Gastrocnemius medialis (tissue), 4 donors: ENCODE measurements at regions of chr5 and their contacts with region 1.

Region 1: DNA sequence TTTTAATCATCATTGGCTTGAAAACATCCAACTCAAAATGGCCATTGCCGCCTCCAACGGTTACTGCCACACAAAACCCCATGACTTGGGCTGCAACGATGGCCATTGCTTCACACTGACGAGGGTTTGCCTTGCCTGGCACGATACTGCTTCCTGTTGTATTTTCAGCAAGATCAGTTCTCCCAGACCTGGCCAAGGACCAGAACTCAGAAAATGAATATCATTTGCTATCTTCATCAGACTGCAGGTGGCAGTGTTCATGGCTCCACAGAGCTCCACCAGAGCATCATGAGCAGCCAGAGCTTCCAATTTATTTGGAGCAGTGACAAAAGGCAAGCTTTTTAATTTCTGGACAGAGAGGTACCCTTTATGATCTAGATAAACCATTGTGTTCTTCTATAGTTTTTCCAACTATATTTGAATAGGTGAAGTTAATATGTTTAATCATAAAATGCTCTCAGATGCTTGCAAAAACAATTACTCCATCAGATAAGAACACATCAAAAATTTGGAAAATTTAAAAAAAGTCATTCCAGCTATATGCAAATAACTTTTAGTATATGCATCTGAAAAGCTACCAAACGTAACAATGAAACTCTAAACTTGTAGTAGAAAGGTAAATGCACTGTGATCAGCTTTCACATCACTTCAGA is 10.4 kb downstream of the AMACR start:
- DNase-seq: peak; percentile 55 to 82
- ATAC-seq: peak; percentile 96 to 99
- H3K4me3 ChIP-seq: no peak overlapping the region
- H3K27ac ChIP-seq: peak overlapping the region; percentile 21 to 67 (median 30)
- H3K4me1 ChIP-seq: peaks cover 0 to 6% of the 10 kb centered on the region in 2 donors
- H3K27me3 ChIP-seq: no peaks in the 10 kb centered on the region
- CTCF ChIP-seq: peak; percentile 36 to 65 (median 50)
- POLR2A ChIP-seq: no peak

Region 2: DNA sequence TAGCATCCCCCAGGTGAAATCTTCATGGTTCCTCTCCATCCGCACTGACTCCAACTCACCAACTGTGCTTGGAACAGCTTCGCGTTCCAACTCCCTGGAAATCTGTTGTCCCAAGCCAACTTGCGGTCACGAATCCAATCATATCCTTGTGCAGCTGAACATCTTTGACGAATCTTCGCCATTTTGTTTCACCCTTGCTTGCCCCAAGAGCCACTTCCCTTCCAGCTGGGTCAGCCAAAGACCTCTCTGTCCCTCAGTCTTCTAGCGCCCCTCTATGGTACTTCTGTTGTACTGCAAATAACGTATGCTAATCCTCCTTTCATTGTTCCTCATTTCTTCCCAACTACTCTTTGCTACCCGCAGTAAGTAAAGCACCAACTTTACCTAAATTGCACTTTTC is 617.7 kb before region 1 on chr5:
- in situ Hi-C with region 1: no loop called
- intact Hi-C with region 1: no loop called
- DNase-seq: no peak
- ATAC-seq: no peak
- H3K4me3 ChIP-seq: no peak overlapping the region
- H3K27ac ChIP-seq: no peak overlapping the region
- H3K4me1 ChIP-seq: no peaks in the 10 kb centered on the region
- H3K27me3 ChIP-seq: no peaks in the 10 kb centered on the region
- CTCF ChIP-seq: peak in 2 of 5 experiments; percentile 23 to 32
- POLR2A ChIP-seq: no peak

Region 3: GRCh38 chr5:34007621-34008600 is 10.5 kb after region 1 on chr5 and contains the start of gene AMACR:
- in situ Hi-C with region 1: no loop called
- intact Hi-C with region 1: loop called (anchors 1 kb)
- DNase-seq: peak; percentile 87 to 93
- ATAC-seq: peak; percentile 96 to 97
- H3K4me3 ChIP-seq: peak within 1 kb of the TSS; percentile 58 to 82 (median 67)
- H3K27ac ChIP-seq: peak within 1 kb of the TSS; percentile 83 to 95 (median 87)
- H3K4me1 ChIP-seq: peaks cover 6 to 14% of the 10 kb centered on the region in 2 donors
- H3K27me3 ChIP-seq: no peaks in the 10 kb centered on the region
- CTCF ChIP-seq: peak in 2 of 5 experiments; percentile 10 to 16
- POLR2A ChIP-seq: peak; percentile 58 to 84
- total RNA-seq, gene AMACR: 2.5 to 15.3 (median 3.1) TPM

Region 4: GRCh38 chr5:34053133-34053532 is 55.7 kb after region 1 on chr5:
- in situ Hi-C with region 1: no loop called
- intact Hi-C with region 1: no loop called
- DNase-seq: no peak
- ATAC-seq: no peak
- H3K4me3 ChIP-seq: no peak overlapping the region
- H3K27ac ChIP-seq: no peak overlapping the region
- H3K4me1 ChIP-seq: peaks cover 0 to 14% of the 10 kb centered on the region in 2 donors
- H3K27me3 ChIP-seq: no peaks in the 10 kb centered on the region
- CTCF ChIP-seq: no peak
- POLR2A ChIP-seq: no peak

Region 5: GRCh38 chr5:34064656-34065055 is 67.2 kb after region 1 on chr5:
- in situ Hi-C with region 1: no loop called
- intact Hi-C with region 1: no loop called
- DNase-seq: no peak
- ATAC-seq: no peak
- H3K4me3 ChIP-seq: no peak overlapping the region
- H3K27ac ChIP-seq: no peak overlapping the region
- H3K4me1 ChIP-seq: no peaks in the 10 kb centered on the region
- H3K27me3 ChIP-seq: no peaks in the 10 kb centered on the region
- CTCF ChIP-seq: no peak
- POLR2A ChIP-seq: no peak

Region 6: GRCh38 chr5:34459908-34460307 is 462.5 kb after region 1 on chr5:
- in situ Hi-C with region 1: loop called (anchors 10 to 25 kb)
- intact Hi-C with region 1: no loop called
- DNase-seq: no peak
- ATAC-seq: no peak
- H3K4me3 ChIP-seq: no peak overlapping the region
- H3K27ac ChIP-seq: no peak overlapping the region
- H3K4me1 ChIP-seq: no peaks in the 10 kb centered on the region
- H3K27me3 ChIP-seq: no peaks in the 10 kb centered on the region
- CTCF ChIP-seq: no peak
- POLR2A ChIP-seq: no peak

Region 7: DNA sequence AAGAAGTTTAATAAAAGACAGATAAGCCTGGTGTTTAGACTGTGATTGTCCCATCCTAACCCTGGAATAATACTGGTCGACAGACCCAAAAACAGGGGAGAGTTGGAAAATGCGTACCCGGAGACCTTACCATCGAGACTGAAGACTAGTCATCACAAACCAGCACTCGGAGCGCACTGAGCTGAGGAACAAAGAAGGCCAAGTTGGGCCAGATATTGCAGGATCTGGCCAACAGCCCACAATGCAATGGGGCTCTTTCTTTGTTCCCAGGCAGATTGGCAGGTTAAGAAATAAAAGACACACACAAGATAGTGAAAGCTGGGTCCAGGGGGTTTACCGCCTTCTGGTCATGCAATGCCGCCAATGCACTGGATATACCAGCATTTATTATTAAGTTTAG is 470.0 kb after region 1 on chr5:
- in situ Hi-C with region 1: loop called (anchors 10 to 25 kb)
- intact Hi-C with region 1: loop called (anchors 2 kb)
- DNase-seq: no peak
- ATAC-seq: no peak
- H3K4me3 ChIP-seq: no peak overlapping the region
- H3K27ac ChIP-seq: no peak overlapping the region
- H3K4me1 ChIP-seq: no peaks in the 10 kb centered on the region
- H3K27me3 ChIP-seq: no peaks in the 10 kb centered on the region
- CTCF ChIP-seq: no peak
- POLR2A ChIP-seq: no peak

Region 8: DNA sequence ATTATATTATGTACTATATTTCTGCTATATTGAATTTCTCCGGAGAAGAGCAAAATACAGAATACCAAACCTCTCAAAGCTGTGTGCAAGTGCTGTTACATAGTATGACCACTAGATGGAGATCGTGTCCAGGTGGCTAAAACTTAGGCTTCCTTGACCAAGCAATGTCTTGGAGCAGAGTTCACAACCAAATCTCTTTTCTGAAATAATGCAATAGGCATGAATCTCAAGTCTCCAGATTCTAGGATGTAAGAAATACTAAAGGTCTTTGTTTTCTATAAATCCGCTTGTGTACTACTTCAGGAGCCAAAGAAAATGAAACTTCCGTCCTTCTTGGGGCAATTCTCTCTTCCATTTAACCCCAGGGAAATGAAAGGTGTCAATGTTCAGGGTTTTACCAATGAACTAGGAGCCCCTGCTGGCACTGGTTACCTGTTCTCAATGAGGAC is 477.1 kb after region 1 on chr5:
- in situ Hi-C with region 1: loop called (anchors 10 to 25 kb)
- intact Hi-C with region 1: no loop called
- DNase-seq: no peak
- ATAC-seq: peak; percentile 60 to 62
- H3K4me3 ChIP-seq: no peak overlapping the region
- H3K27ac ChIP-seq: no peak overlapping the region
- H3K4me1 ChIP-seq: no peaks in the 10 kb centered on the region
- H3K27me3 ChIP-seq: no peaks in the 10 kb centered on the region
- CTCF ChIP-seq: peak; percentile 54 to 96 (median 75)
- POLR2A ChIP-seq: no peak